Naive thymus-derived CD4-positive, alpha-beta T cell (primary cell): ENCODE measurements at regions of chr1 and their contacts with region 1.

Region 1: GRCh38 chr1:156054500-156055280 is at the start of gene LAMTOR2:
- DNase-seq: peak; percentile 86 to 96 (median 93)
- ATAC-seq: peak; percentile 87
- H3K4me3 ChIP-seq: peak within 1 kb of the TSS; percentile 78
- H3K4me3 Mint-ChIP-seq: peak within 1 kb of the TSS; percentile 92 to 100 (median 96)
- H3K27ac ChIP-seq: peak within 1 kb of the TSS; percentile 82
- H3K27ac Mint-ChIP-seq: peak within 1 kb of the TSS; percentile 85 to 98 (median 91)
- H3K4me1 ChIP-seq: peaks cover 9 to 17% of the 10 kb centered on the region in 2 donors
- H3K4me1 Mint-ChIP-seq: peaks cover 16 to 45% (median 35%) of the 10 kb centered on the region in 7 donors
- H3K27me3 ChIP-seq: no peaks in the 10 kb centered on the region
- H3K27me3 Mint-ChIP-seq: no peaks in the 10 kb centered on the region
- total RNA-seq, gene LAMTOR2: 13.3 to 66.1 (median 27.9) TPM

Region 2: GRCh38 chr1:155084722-155085503 is 969.8 kb before region 1 on chr1:
- CTCF ChIA-PET with region 1: no interaction called
- POLR2A ChIA-PET with region 1: no interaction called
- intact Hi-C with region 1: loop called in 1 of 2 experiments (anchors 5 kb)
- DNase-seq: peak; percentile 87 to 96 (median 93)
- ATAC-seq: peak; percentile 86
- H3K4me3 ChIP-seq: peak overlapping the region; percentile 97
- H3K4me3 Mint-ChIP-seq: peak overlapping the region; percentile 88 to 100 (median 94)
- H3K27ac ChIP-seq: peak overlapping the region; percentile 63
- H3K27ac Mint-ChIP-seq: peak overlapping the region; percentile 88 to 98 (median 93)
- H3K4me1 ChIP-seq: peaks cover 51 to 53% of the 10 kb centered on the region in 2 donors
- H3K4me1 Mint-ChIP-seq: peaks cover 24 to 43% (median 41%) of the 10 kb centered on the region in 7 donors
- H3K27me3 ChIP-seq: peaks cover 28 to 31% of the 10 kb centered on the region in 2 donors
- H3K27me3 Mint-ChIP-seq: peaks cover 17 to 41% (median 23%) of the 10 kb centered on the region in 5 donors

Region 3: GRCh38 chr1:155308493-155309422 is 745.9 kb before region 1 on chr1 and contains the start of gene FDPS:
- CTCF ChIA-PET with region 1: no interaction called
- POLR2A ChIA-PET with region 1: no interaction called
- intact Hi-C with region 1: loop called (anchors 1 kb)
- DNase-seq: peak; percentile 83 to 98 (median 95)
- ATAC-seq: peak; percentile 98
- H3K4me3 ChIP-seq: peak within 1 kb of the TSS; percentile 90
- H3K4me3 Mint-ChIP-seq: peak within 1 kb of the TSS; percentile 88 to 99 (median 97)
- H3K27ac ChIP-seq: peak within 1 kb of the TSS; percentile 87
- H3K27ac Mint-ChIP-seq: peak within 1 kb of the TSS; percentile 89 to 98 (median 96)
- H3K4me1 ChIP-seq: peaks cover 11 to 20% of the 10 kb centered on the region in 2 donors
- H3K4me1 Mint-ChIP-seq: peaks cover 12 to 43% (median 27%) of the 10 kb centered on the region in 7 donors
- H3K27me3 ChIP-seq: no peaks in the 10 kb centered on the region
- H3K27me3 Mint-ChIP-seq: no peaks in the 10 kb centered on the region
- total RNA-seq, gene FDPS: 58.5 to 193 (median 79.0) TPM

Region 4: GRCh38 chr1:155744711-155745283 is 309.9 kb before region 1 on chr1:
- CTCF ChIA-PET with region 1: no interaction called
- POLR2A ChIA-PET with region 1: no interaction called
- intact Hi-C with region 1: loop called in 1 of 2 experiments (anchors 10 kb)
- DNase-seq: no peak
- ATAC-seq: no peak
- H3K4me3 ChIP-seq: peak overlapping the region; percentile 80
- H3K4me3 Mint-ChIP-seq: peak overlapping the region; percentile 89 to 98 (median 95)
- H3K27ac ChIP-seq: peak overlapping the region; percentile 78
- H3K27ac Mint-ChIP-seq: peak overlapping the region; percentile 90 to 97 (median 92)
- H3K4me1 ChIP-seq: peaks cover 6 to 7% of the 10 kb centered on the region in 2 donors
- H3K4me1 Mint-ChIP-seq: peaks cover 4 to 12% (median 8%) of the 10 kb centered on the region in 7 donors
- H3K27me3 ChIP-seq: no peaks in the 10 kb centered on the region
- H3K27me3 Mint-ChIP-seq: no peaks in the 10 kb centered on the region

Region 5: GRCh38 chr1:155978325-155978972 is 76.2 kb before region 1 on chr1 and contains the start of gene ARHGEF2:
- CTCF ChIA-PET with region 1: interaction called, 5 read pairs
- POLR2A ChIA-PET with region 1: no interaction called
- intact Hi-C with region 1: loop called in 1 of 2 experiments (anchors 2 kb)
- DNase-seq: peak; percentile 49 to 81 (median 68)
- ATAC-seq: peak; percentile 78
- H3K4me3 ChIP-seq: peak within 1 kb of the TSS; percentile 74
- H3K4me3 Mint-ChIP-seq: peak within 1 kb of the TSS; percentile 89 to 98 (median 94)
- H3K27ac ChIP-seq: peak within 1 kb of the TSS; percentile 90
- H3K27ac Mint-ChIP-seq: peak within 1 kb of the TSS; percentile 77 to 98 (median 95)
- H3K4me1 ChIP-seq: peaks cover 55 to 58% of the 10 kb centered on the region in 2 donors
- H3K4me1 Mint-ChIP-seq: peaks cover 59 to 79% (median 69%) of the 10 kb centered on the region in 7 donors
- H3K27me3 ChIP-seq: no peaks in the 10 kb centered on the region
- H3K27me3 Mint-ChIP-seq: no peaks in the 10 kb centered on the region
- total RNA-seq, gene ARHGEF2: 108 to 236 (median 182) TPM

Region 6: DNA sequence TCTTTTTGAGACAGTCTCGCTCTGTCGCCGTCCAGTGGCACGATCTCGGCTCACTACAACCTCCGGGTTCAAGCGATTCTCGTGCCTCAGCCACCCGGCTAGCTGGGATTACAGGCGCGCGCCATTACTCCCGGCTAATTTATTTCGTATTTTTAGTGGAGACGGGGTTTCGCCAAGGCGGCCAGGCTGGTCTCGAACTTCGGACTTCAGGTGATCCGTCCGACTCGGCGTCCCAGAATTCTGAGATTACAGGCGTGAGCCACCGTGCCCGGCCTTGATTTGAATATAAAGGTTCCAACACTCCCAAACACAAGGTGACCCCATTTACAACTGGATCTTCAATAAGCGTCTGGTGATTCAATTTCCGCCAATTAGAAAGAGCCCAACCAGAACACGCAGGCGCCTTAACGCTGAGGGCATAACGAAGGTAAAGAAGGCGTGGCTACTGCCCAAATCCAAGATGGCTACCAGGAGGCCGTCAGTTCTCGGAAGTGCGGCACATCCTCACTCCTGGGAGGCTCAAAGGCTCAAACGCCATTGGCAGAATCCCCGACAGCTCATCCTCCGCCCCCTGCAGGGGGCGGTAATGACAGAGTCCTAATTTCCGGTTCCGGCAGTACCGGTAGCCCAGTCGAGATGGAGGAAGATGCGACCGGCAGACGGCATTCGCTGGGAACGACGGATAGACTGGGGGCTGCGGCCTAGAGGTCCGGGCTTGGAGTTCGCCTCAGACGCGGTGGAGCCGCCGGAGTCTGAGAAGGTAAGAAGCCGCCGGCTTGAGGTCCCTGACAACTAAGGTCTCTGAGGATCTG is 139.0 kb after region 1 on chr1 and contains the start of gene SLC25A44:
- CTCF ChIA-PET with region 1: no interaction called
- POLR2A ChIA-PET with region 1: interaction called, 3 read pairs
- intact Hi-C with region 1: loop called (anchors 1 kb)
- DNase-seq: peak; percentile 94 to 98 (median 97)
- ATAC-seq: peak; percentile 99
- H3K4me3 ChIP-seq: peak within 1 kb of the TSS; percentile 92
- H3K4me3 Mint-ChIP-seq: peak within 1 kb of the TSS; percentile 83 to 99 (median 97)
- H3K27ac ChIP-seq: peak within 1 kb of the TSS; percentile 86
- H3K27ac Mint-ChIP-seq: peak within 1 kb of the TSS; percentile 85 to 97 (median 93)
- H3K4me1 ChIP-seq: peaks cover 12 to 31% of the 10 kb centered on the region in 2 donors
- H3K4me1 Mint-ChIP-seq: peaks cover 22 to 53% (median 45%) of the 10 kb centered on the region in 7 donors
- H3K27me3 ChIP-seq: no peaks in the 10 kb centered on the region
- H3K27me3 Mint-ChIP-seq: no peaks in the 10 kb centered on the region
- total RNA-seq, gene SLC25A44: 17.8 to 38.4 (median 19.6) TPM

Region 7: GRCh38 chr1:156500797-156501499 is 446.3 kb after region 1 on chr1:
- CTCF ChIA-PET with region 1: no interaction called
- POLR2A ChIA-PET with region 1: no interaction called
- intact Hi-C with region 1: loop called in 1 of 2 experiments (anchors 1 kb)
- DNase-seq: peak; percentile 91 to 97 (median 93)
- ATAC-seq: peak; percentile 83
- H3K4me3 ChIP-seq: peak overlapping the region; percentile 81
- H3K4me3 Mint-ChIP-seq: peak overlapping the region; percentile 88 to 97 (median 92)
- H3K27ac ChIP-seq: peak overlapping the region; percentile 99
- H3K27ac Mint-ChIP-seq: peak overlapping the region; percentile 93 to 100 (median 99)
- H3K4me1 ChIP-seq: peaks cover 70 to 71% of the 10 kb centered on the region in 2 donors
- H3K4me1 Mint-ChIP-seq: peaks cover 55 to 75% (median 71%) of the 10 kb centered on the region in 7 donors
- H3K27me3 ChIP-seq: no peaks in the 10 kb centered on the region
- H3K27me3 Mint-ChIP-seq: no peaks in the 10 kb centered on the region